Panc1 (cell line): ENCODE measurements at regions of chr9 and their contacts with region 1.

Region 1: DNA sequence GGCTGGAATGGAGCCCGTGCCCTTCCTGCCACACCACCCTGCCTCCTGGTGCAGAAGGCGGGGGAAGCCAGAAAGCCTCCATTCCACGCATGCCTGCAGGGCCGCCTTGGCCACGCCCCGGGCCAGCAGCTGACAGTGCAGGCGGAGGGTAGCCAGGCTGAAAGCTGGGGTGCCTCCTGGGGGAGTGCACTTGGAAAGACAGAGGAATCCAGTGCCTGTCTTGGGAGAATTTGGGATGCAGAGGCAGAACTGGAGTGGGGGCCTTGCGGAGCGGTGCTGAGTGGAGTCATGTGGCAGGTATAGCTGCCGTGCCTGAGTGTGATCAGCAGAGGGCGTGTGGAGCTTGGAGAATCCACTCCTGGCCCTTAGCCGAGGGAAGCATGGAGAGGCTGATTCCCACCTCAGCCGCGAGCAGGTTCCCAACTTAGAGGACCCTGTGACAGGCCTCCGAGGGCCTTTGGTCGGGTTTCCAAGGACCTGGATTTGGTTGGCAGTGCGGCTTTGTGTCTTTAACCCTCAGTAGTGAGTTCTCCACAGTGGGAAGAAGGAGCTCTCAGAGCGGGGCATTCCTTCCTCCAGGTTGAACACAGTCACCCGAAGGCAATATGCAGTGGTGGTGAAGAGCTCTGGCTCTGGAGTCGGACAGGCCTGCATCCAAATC is 9.1 kb upstream of the URM1 start:
- DNase-seq: peak; percentile 42
- ATAC-seq: peak; percentile 94
- H3K4me3 ChIP-seq: peak overlapping the region; percentile 36 to 58
- H3K27ac ChIP-seq: peak overlapping the region; percentile 39; the same call in 1 of the 2 replicates
- H3K4me1 ChIP-seq: peaks cover 3% of the 10 kb centered on the region; the same call in 1 of the 2 replicates
- H3K27me3 ChIP-seq: no peaks in the 10 kb centered on the region
- CTCF ChIP-seq: peak; percentile 87

Region 2: DNA sequence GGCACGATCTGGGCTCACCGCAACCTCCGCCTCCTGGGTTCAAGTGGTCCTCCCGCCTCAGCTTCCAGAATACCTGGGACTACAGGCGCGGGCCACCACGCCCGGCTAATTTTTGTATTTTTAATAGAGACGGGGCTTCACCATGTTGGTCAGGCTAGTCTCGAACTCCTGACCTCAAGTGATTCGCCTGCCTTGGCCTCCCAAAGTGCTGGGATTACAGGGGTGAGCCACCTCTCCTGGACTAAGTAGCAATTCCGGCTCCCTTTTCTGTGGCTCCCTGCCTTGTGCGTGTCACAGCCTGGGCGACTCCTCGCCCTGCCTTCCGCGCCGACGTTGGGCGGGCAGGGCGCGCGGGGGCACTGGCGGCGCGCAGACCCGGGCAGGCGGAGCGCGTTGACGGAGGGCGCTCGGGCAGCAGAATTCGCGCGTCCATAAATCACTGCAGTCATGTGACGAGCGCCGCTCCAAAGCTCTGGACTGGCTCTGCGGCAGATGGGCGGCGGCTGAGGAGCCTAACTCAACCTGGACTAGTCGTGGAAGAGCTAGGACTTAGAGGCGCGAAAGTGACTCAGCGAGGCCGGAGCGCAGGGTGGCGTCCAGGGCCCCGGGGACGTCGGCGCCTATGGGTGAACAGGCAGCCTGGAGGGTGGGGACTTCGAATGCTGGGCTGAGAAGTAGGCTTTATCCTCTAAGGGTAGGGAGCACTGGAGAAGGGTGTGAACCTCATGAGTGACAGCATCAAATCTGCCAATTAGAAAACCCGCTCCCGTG is 169.3 kb before region 1 on chr9:
- CTCF ChIA-PET with region 1: no interaction called
- POLR2A ChIA-PET with region 1: no interaction called
- in situ Hi-C with region 1: no loop called
- intact Hi-C with region 1: no loop called
- DNase-seq: peak; percentile 75
- ATAC-seq: peak; percentile 94
- H3K4me3 ChIP-seq: peak overlapping the region; percentile 67 to 68
- H3K27ac ChIP-seq: peak overlapping the region; percentile 70
- H3K4me1 ChIP-seq: no peaks in the 10 kb centered on the region; the same call in 1 of the 2 replicates
- H3K27me3 ChIP-seq: no peaks in the 10 kb centered on the region
- CTCF ChIP-seq: peak; percentile 84

Region 3: GRCh38 chr9:128253140-128253990 is 108.8 kb before region 1 on chr9:
- CTCF ChIA-PET with region 1: interaction called, 13 read pairs
- POLR2A ChIA-PET with region 1: no interaction called
- in situ Hi-C with region 1: no loop called
- intact Hi-C with region 1: no loop called
- DNase-seq: no peak
- ATAC-seq: no peak
- H3K4me3 ChIP-seq: no peak overlapping the region
- H3K27ac ChIP-seq: no peak overlapping the region
- H3K4me1 ChIP-seq: no peaks in the 10 kb centered on the region
- H3K27me3 ChIP-seq: no peaks in the 10 kb centered on the region
- CTCF ChIP-seq: no peak

Region 4: DNA sequence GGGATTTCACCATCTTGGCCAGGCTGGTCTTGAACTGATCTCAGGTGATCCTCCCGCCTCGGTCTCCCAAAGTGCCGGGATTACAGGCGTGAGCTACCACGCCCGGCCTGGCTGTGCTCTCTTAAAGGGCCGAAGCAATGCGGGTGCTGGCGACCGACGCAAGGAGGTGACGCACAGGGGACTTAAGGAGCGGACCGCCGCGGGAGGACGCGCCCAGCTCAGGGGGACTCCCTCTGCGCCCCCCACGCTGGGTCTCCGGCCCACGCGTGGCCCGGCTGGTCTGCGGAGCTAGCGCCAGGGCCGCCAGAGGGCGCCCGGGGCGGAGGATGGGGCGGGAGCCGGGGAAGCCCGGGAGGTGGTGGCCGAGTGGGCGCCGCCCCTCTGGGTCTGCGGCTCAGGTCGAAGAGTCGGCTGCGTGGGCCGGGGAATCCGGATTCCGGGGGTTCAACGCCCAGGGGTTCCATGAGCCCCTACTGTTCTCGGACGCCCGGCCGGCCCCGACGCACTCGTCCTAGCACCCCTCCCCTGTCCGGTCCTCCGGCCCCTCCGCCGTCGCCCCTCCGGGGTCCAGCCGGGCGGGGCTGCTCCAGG is 58.0 kb after region 1 on chr9:
- CTCF ChIA-PET with region 1: interaction called, 13 read pairs
- POLR2A ChIA-PET with region 1: interaction called, 3 read pairs
- in situ Hi-C with region 1: no loop called
- intact Hi-C with region 1: no loop called
- DNase-seq: no peak
- ATAC-seq: peak; percentile 91
- H3K4me3 ChIP-seq: peak overlapping the region; percentile 64 to 65
- H3K27ac ChIP-seq: peak overlapping the region; percentile 29; the same call in 1 of the 2 replicates
- H3K4me1 ChIP-seq: peaks cover 4% of the 10 kb centered on the region
- H3K27me3 ChIP-seq: no peaks in the 10 kb centered on the region
- CTCF ChIP-seq: peak; percentile 91